ENCODE measurements at regions of chr3 and their contacts with region 1.

Region 1: DNA sequence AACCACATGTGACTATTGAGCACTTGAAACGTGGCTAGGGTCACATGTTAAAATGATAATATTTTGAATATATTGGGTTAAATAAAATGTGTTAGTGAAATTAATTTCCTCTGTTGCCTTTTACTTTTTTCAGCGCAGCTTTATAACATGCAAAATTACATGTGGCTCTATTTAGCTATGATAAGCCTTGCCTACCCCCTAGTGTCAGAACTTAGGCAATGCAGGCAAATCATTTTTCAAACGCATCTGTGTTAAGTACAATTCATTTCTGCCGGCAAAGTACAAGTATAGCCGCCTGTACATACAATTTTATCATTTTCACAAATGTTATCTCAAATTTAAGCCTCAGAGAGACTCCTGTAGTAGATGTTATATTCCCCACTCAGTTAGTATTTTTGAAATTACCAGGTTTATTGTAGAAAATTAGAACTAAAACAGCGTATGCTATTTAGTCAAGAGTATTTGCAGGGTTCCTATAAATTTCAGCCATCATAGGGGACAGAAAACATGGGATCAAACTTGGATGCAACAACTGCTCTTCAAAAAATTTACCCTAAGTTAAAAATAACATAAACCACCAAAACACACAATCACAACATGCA is 56.1 kb downstream of the TAFA4 start:
- DNase-seq: no peak
- ATAC-seq: peak; percentile 69
- H3K4me3 Mint-ChIP-seq: no peak overlapping the region
- H3K27ac Mint-ChIP-seq: no peak overlapping the region
- H3K4me1 Mint-ChIP-seq: no peaks in the 10 kb centered on the region
- H3K27me3 Mint-ChIP-seq: peaks cover 23% of the 10 kb centered on the region
- CTCF ChIP-seq: peak; percentile 32

Region 2: DNA sequence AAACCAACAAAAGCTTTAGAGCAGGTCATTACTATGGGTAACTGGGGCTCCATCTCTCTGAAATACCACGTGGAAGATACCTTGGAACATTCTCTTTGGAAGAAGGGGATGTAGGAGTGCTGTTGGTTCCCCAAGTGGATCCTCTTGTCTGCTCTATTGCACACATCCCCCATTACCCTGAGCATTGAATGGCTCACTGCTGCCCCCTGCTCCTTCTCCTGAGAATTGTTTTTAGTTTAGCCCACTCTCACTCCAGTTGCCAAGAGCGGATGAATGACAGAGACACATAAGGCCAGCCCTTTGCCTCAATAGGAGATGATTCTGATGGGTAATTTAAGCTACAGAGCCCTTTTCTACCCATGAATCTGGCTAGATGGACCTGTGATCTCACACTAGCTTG is 1086.2 kb before region 1 on chr3:
- CTCF ChIA-PET with region 1: no interaction called
- POLR2A ChIA-PET with region 1: no interaction called
- intact Hi-C with region 1: loop called (anchors 5 kb)
- DNase-seq: no peak
- ATAC-seq: peak; percentile 50
- H3K4me3 Mint-ChIP-seq: no peak overlapping the region
- H3K27ac Mint-ChIP-seq: no peak overlapping the region
- H3K4me1 Mint-ChIP-seq: no peaks in the 10 kb centered on the region
- H3K27me3 Mint-ChIP-seq: peaks cover 11% of the 10 kb centered on the region
- CTCF ChIP-seq: no peak

Measured in activated B cell treated with CpG ODN at 0.5 μM for 24 hours (primary cell).